ENCODE measurements at regions of chr18 and their contacts with region 1.

Region 1: DNA sequence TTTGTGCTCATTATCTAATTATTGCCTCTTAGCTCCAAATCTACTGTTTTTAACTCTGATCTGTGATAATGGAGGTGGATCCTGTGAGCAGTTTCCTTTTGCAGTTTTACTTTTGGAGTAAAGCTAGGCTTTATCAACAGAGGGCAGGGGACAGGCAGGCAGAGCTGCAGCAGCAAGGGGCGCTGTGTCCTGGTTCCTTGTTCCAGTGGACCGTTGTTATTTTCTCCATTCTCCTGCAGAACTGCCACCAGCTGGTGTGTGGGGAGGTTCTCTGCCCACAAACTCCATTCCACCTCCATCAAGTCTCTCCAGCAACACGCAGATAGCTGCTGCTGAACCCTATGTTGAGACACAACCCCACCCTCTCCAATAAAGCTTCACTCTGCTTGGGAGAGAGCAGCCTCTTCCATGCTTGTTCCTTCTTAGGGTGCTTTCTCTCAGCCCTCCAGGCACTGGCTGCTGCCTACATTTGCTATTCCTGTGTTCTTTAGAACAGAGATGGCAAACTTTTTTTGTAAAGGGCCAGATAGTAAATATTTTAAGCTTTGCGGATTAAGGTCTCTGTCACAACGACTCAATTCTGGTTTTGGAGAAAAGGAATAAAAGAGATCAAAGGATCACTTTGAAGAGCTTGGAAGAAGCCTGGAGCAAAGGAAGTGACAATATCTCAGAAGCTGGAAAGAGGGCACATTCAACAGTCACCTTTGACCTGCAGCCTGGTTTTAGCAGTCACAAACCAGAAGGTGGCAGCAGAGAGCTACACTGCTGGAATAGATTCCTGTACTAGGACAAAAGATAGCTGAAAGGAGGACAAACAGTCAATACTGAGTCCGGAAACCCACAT is 208.8 kb downstream of the CCDC178 start:
- DNase-seq: peak; percentile 60
- ATAC-seq: peak; percentile 94
- H3K4me3 ChIP-seq: no peak overlapping the region
- H3K27ac ChIP-seq: no peak overlapping the region
- H3K4me1 ChIP-seq: no peaks in the 10 kb centered on the region
- H3K27me3 ChIP-seq: no peaks in the 10 kb centered on the region
- CTCF ChIP-seq: peak; percentile 77
- POLR2A ChIP-seq: no peak
- RAD21 ChIP-seq: peak; percentile 63

Region 2: DNA sequence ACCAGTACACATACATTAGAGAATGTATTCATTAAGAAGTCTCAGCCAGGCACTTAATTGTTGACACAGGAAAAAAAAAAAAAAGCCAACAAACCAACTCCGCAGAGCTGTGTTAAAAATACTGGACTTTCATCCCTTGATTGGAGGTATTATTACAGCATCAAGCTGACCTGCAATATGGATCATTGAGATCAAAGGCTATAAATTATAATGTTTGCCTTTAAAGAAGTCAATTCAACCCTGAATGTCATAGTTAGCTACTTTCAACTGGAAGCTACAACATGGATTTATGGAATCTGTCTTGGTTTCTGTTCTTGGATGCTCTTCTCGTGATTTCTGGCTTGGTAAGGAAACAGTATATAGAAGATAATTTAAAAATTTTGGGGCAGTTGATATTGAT is 1041.9 kb before region 1 on chr18 and contains the start of gene MEP1B:
- CTCF ChIA-PET with region 1: no interaction called
- POLR2A ChIA-PET with region 1: no interaction called
- dilution Hi-C with region 1: no loop called
- in situ Hi-C with region 1: no loop called
- intact Hi-C with region 1: no loop called
- DNase-seq: no peak
- ATAC-seq: no peak
- H3K4me3 ChIP-seq: no peak within 1 kb of the TSS
- H3K27ac ChIP-seq: no peak within 1 kb of the TSS
- H3K4me1 ChIP-seq: no peaks in the 10 kb centered on the region
- H3K27me3 ChIP-seq: no peaks in the 10 kb centered on the region
- CTCF ChIP-seq: no peak
- POLR2A ChIP-seq: no peak
- RAD21 ChIP-seq: no peak
- total RNA-seq, gene MEP1B: not detected in 2 replicates

Region 3: DNA sequence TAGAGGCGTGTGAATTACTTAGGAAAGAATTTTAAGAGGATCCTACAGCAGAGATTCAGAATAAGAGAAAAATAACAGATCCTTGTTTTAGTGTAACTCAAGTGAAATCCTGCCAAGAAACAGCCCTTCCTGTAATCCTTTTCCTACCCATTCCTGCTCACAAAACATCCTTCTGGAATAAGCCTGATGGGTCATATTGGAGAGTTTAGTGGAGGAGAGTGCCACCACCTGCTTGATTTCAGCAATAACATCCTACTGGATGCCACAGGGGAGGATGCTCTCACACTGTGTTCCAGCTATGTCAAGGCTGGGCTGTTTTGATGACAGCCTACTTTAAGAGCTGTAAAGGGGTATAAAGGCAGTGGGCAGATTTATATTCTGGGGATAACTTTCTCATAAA is 263.6 kb after region 1 on chr18:
- CTCF ChIA-PET with region 1: no interaction called
- POLR2A ChIA-PET with region 1: no interaction called
- dilution Hi-C with region 1: no loop called
- in situ Hi-C with region 1: no loop called
- intact Hi-C with region 1: loop called (anchors 1 kb)
- DNase-seq: peak; percentile 13
- ATAC-seq: peak; percentile 81
- H3K4me3 ChIP-seq: no peak overlapping the region
- H3K27ac ChIP-seq: no peak overlapping the region
- H3K4me1 ChIP-seq: no peaks in the 10 kb centered on the region
- H3K27me3 ChIP-seq: no peaks in the 10 kb centered on the region
- CTCF ChIP-seq: peak; percentile 30
- POLR2A ChIP-seq: no peak
- RAD21 ChIP-seq: peak; percentile 34

Region 4: GRCh38 chr18:34322365-34323289 is 1090.9 kb after region 1 on chr18:
- CTCF ChIA-PET with region 1: no interaction called
- POLR2A ChIA-PET with region 1: no interaction called
- dilution Hi-C with region 1: no loop called
- in situ Hi-C with region 1: no loop called
- intact Hi-C with region 1: loop called (anchors 5 kb)
- DNase-seq: peak; percentile 57
- ATAC-seq: 0 out of 2 replicates have a peak, but pooled peaks have one; percentile 46
- H3K4me3 ChIP-seq: no peak overlapping the region
- H3K27ac ChIP-seq: no peak overlapping the region
- H3K4me1 ChIP-seq: no peaks in the 10 kb centered on the region
- H3K27me3 ChIP-seq: no peaks in the 10 kb centered on the region
- CTCF ChIP-seq: peak; percentile 66
- POLR2A ChIP-seq: no peak
- RAD21 ChIP-seq: peak; percentile 67